ENCODE measurements at regions of chr16 and their contacts with region 1.

Region 1: DNA sequence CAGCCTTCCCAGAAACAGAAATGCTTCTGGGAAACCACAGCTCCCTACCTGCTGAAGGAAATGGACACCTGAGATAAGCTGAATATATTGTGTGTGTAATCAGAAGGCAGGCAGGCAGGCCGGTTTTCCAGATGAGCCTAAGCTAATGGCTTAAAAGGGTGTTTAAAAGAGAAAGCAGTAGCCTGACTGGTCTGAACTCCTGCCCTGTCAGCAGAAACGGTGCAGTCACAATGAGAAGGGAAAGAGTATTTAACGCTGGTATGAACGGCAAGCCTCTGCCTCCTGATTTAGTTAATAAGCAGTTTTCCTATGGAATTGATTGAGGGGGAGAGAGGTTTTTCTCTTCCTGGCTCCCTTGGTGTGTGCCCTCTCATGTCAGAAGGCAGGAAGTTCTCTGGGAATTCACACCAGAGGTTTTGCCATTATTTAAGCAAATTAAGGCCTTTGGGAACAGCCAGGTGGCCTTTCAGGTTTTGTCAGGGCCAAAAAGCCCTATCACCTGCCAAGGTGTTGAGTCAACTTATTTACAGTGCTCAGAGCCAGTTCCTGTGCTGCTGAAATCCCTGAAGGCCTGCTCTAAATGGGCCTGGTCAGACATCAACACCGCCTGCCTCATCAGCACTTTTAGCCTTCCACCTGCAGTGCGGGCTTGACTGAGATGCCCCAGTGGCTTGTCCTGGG is 41.6 kb downstream of the CDH1 start:
- DNase-seq: peak; percentile 87
- ATAC-seq: peak; percentile 82
- H3K4me3 ChIP-seq: peak overlapping the region; percentile 33; the same call in 1 of the 2 replicates
- H3K27ac ChIP-seq: peak overlapping the region; percentile 85
- H3K4me1 ChIP-seq: peaks cover 21% of the 10 kb centered on the region
- H3K27me3 ChIP-seq: no peaks in the 10 kb centered on the region
- CTCF ChIP-seq: no peak

Region 2: GRCh38 chr16:68737046-68737729 is 41.5 kb before region 1 on chr16 and contains the start of gene CDH1:
- CTCF ChIA-PET with region 1: no interaction called
- POLR2A ChIA-PET with region 1: no interaction called
- intact Hi-C with region 1: no loop called
- DNase-seq: peak; percentile 86
- ATAC-seq: peak; percentile 52
- H3K4me3 ChIP-seq: peak within 1 kb of the TSS; percentile 90
- H3K27ac ChIP-seq: peak within 1 kb of the TSS; percentile 57
- H3K4me1 ChIP-seq: peaks cover 30% of the 10 kb centered on the region
- H3K27me3 ChIP-seq: no peaks in the 10 kb centered on the region
- CTCF ChIP-seq: no peak
- total RNA-seq, gene CDH1: 100 and 124 TPM in 2 replicates

Region 3: GRCh38 chr16:68756250-68756915 is 22.3 kb before region 1 on chr16:
- CTCF ChIA-PET with region 1: no interaction called
- POLR2A ChIA-PET with region 1: no interaction called
- intact Hi-C with region 1: loop called (anchors 2 kb)
- DNase-seq: peak; percentile 98
- ATAC-seq: peak; percentile 78
- H3K4me3 ChIP-seq: peak overlapping the region; percentile 10; the same call in 1 of the 2 replicates
- H3K27ac ChIP-seq: peak overlapping the region; percentile 98
- H3K4me1 ChIP-seq: peaks cover 71% of the 10 kb centered on the region
- H3K27me3 ChIP-seq: no peaks in the 10 kb centered on the region
- CTCF ChIP-seq: no peak

Measured in PC-3 (cell line).